Adrenal gland (tissue), 19 donors: ENCODE measurements at regions of chr2 and their contacts with region 1.

Region 1: GRCh38 chr2:181715033-181715630 is 34.8 kb upstream of the NEUROD1 start:
- DNase-seq: peak; percentile 55 to 85 (median 67)
- H3K4me3 ChIP-seq: no peak overlapping the region
- H3K27ac ChIP-seq: no peak overlapping the region
- H3K4me1 ChIP-seq: no peaks in the 10 kb centered on the region
- H3K27me3 ChIP-seq: no peaks in the 10 kb centered on the region
- CTCF ChIP-seq: peak; percentile 29 to 74 (median 66)
- POLR2A ChIP-seq: no peak

Region 2: DNA sequence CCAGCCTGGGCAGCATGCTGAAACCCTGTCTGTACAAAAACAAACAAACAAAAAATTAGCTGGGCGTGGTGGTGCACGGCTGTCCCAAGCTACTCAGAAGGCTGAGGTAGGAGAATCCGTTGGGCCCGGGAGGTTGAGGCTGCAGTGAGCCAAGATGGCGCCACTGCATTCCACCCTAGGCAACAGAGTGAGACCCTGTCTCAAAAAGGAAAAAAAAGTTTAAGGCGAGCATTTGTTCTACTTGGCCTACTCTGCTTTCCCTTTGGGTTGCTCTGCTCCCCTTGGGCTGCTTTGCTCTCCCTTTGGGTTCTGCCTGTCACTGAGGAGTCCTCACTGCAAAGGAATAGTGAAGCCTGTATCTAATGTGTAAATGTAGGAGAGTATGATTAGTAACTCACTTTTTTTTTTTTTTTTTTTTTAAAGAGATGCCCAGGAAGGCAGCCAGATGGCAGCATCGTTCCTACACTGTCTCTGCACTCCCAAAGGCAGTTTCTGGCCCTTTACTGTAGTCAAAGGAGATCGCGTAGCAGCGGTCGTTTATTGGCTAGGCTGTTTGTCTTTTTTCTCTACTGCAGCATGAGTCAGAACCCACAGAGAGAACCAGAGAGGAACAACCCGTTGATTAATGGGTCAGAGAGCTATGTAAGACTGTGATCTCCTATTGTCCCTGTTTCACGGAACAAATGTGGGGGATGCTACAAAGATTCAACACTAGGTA is 1589.7 kb before region 1 on chr2:
- intact Hi-C with region 1: loop called (anchors 5 to 10 kb)
- DNase-seq: peak; percentile 58 to 83 (median 76)
- H3K4me3 ChIP-seq: no peak overlapping the region
- H3K27ac ChIP-seq: no peak overlapping the region
- H3K4me1 ChIP-seq: no peaks in the 10 kb centered on the region
- H3K27me3 ChIP-seq: no peaks in the 10 kb centered on the region
- CTCF ChIP-seq: peak; percentile 15 to 63 (median 38)
- POLR2A ChIP-seq: no peak

Region 3: DNA sequence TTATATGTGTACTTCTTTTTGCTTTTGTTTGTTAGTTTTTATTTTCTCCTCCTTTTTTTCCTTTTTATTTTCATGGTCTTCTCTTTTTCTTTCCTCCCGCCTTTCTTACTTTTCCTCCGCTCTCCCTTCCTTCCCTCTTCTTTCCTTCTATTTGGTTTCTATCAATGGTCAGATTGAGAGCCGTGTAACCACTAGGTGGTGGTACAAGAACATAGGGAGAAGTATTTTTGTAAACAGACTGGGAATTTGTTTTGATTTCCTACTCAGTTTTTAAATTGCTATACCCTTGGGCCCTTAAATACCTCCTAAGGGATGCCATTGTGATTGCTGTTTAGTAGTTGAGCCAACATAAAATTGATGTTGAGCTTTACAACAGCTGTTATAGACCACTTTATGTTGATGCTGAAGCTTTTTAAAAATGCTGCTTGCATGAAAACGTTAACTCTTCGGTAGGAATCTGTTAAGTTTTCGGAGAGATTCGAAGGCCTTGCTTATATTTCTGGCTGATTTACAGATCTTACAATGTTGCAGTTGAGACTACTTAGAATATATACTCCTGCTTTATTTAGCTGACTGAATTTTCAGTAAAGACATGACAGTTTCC is 610.5 kb before region 1 on chr2:
- intact Hi-C with region 1: loop called in 1 of 2 experiments (anchors 10 kb)
- DNase-seq: peak in 2 of 7 donors; percentile 15 to 19
- H3K4me3 ChIP-seq: no peak overlapping the region
- H3K27ac ChIP-seq: no peak overlapping the region
- H3K4me1 ChIP-seq: no peaks in the 10 kb centered on the region
- H3K27me3 ChIP-seq: no peaks in the 10 kb centered on the region
- CTCF ChIP-seq: peak; percentile 26 to 62 (median 52)
- POLR2A ChIP-seq: no peak

Region 4: DNA sequence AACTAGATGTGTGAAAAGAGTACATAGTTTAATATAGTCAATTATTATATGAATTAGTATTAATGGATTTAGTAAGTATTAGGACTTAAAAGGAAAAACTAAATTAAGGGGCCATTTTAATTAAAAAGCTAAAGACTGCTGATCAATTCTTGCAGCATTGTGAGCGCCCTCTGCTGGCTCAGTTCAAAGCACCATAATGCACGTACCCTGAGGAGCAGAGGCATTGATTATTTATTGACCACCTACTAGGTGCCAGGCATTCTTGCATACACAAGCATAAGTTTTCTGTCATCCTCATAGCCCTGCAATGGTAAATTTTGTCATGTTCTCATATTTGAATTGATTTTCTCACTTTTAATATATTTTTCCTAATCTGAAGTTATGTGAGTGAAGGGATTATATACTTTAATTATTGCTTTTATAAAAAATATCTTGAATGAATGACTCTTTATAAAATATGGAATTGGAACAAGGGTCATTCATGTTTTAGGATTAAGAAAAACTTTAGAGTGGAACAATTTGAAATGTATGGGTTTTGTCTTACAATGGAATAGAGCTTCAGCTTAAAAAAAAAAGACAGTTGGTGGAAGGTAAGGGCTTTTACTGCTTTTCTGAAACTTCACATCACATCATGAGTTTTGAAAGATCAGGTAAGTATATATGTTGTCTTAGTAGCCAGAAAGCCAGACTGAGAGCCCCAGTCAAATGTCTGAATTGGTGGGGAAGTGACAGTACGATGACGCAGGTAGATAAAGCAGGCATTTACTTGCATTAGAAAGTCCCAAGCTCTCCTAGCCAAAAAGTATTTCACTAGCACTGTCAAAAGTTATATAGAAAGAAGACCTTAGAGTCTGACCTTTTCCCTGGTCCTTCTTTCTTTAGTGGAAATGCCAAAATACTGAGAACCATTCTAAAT is 248.2 kb before region 1 on chr2:
- intact Hi-C with region 1: loop called in 1 of 2 experiments (anchors 10 kb)
- DNase-seq: peak; percentile 32 to 83 (median 62)
- H3K4me3 ChIP-seq: no peak overlapping the region
- H3K27ac ChIP-seq: no peak overlapping the region
- H3K4me1 ChIP-seq: no peaks in the 10 kb centered on the region
- H3K27me3 ChIP-seq: no peaks in the 10 kb centered on the region
- CTCF ChIP-seq: peak; percentile 39 to 79 (median 58)
- POLR2A ChIP-seq: no peak

Region 5: GRCh38 chr2:181573140-181573736 is 141.9 kb before region 1 on chr2:
- intact Hi-C with region 1: loop called in 1 of 2 experiments (anchors 10 kb)
- DNase-seq: no peak
- H3K4me3 ChIP-seq: no peak overlapping the region
- H3K27ac ChIP-seq: no peak overlapping the region
- H3K4me1 ChIP-seq: no peaks in the 10 kb centered on the region
- H3K27me3 ChIP-seq: no peaks in the 10 kb centered on the region
- CTCF ChIP-seq: peak in 1 of 6 experiments; percentile 31
- POLR2A ChIP-seq: no peak

Region 6: DNA sequence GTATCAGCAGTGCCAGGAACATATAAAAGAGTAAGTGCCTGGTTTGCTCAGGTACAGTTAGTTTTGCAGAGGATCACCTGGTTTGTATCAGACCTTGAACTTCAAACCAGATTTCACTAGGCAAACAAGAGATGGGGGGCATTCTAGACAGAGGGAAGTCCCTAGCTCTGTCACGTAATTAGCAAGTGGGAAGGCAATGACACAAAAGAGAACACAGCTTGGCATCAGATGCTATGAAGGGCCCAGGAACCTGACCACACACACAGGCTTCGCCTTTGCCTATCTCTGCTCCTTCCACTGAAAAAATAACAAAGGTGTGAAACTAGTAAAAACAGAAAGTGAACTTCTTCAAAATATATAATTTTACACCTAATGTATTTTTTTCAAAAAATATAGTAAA is 120.8 kb before region 1 on chr2:
- intact Hi-C with region 1: no loop called
- DNase-seq: no peak
- H3K4me3 ChIP-seq: no peak overlapping the region
- H3K27ac ChIP-seq: no peak overlapping the region
- H3K4me1 ChIP-seq: no peaks in the 10 kb centered on the region
- H3K27me3 ChIP-seq: no peaks in the 10 kb centered on the region
- CTCF ChIP-seq: no peak
- POLR2A ChIP-seq: no peak

Region 7: DNA sequence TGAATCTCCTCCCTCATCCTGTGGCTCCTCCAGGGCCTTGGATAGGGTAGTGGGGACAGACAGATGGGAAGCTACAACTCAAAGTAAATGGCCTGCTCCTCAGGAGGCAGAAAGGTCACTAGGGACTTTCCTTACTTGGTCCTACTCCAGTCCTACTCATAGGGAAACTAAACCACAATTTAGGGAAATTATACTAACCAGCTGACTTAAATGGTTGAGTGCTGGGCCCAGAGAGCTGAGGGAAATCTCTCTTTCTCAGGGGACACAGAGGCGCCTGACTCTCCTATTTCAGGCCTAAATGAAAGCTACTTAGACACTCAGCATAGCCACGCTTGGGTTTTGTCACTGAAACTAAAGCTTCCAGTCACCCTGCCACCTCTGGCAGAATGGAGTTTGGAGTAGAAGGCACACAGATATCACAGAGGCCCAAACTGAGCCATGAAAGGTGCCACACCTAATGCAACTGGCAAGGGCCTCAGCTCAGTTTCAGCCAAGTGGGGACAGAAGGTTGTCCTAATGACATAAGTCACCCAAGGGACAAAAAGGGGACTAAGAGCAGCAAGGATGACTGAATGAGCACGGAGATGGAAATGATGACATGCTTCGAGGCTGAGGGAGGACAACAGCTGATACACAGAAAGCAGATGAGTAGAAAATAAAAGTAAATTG is 82.3 kb before region 1 on chr2:
- intact Hi-C with region 1: no loop called
- DNase-seq: no peak
- H3K4me3 ChIP-seq: no peak overlapping the region
- H3K27ac ChIP-seq: no peak overlapping the region
- H3K4me1 ChIP-seq: no peaks in the 10 kb centered on the region
- H3K27me3 ChIP-seq: no peaks in the 10 kb centered on the region
- CTCF ChIP-seq: no peak
- POLR2A ChIP-seq: no peak

Region 8: DNA sequence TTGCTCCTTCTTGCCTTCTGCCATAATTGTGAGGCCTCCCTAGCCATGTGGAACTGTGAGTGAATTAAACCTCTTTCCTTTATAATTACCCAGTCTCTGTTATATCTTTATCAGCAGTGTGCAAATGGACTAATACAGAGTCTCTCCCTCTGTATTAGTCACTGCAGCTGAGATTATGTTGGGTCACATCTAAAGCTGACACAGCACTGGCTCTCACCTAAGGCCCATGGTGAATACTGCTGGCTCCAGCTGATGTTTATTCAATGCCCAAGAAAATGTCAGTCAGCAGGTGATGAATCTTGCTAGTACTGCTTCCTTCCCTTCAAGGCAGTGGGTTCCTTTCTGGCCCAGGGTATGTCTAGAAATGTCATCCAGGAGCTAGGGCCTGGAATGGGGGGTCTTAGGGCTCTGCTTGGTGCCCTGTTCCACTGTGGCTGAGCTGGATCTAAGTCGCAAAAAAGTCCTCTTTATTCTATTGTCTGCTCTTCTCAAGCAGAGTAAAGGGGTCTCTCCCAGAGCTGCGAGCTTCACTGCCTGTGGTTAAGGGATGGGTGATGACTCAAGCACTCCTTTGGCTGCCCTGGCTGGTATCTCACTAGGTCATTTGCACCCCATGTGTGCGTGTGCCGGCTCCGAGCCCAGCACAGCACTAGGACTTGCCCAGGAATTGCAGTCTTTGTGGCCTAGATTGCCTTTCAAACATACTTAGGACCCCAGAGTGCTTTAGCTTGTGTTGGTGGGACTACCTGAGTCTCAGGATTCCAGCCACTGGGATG is 300.4 kb after region 1 on chr2:
- intact Hi-C with region 1: no loop called
- DNase-seq: no peak
- H3K4me3 ChIP-seq: no peak overlapping the region
- H3K27ac ChIP-seq: no peak overlapping the region
- H3K4me1 ChIP-seq: no peaks in the 10 kb centered on the region
- H3K27me3 ChIP-seq: no peaks in the 10 kb centered on the region
- CTCF ChIP-seq: no peak
- POLR2A ChIP-seq: no peak

Region 9: DNA sequence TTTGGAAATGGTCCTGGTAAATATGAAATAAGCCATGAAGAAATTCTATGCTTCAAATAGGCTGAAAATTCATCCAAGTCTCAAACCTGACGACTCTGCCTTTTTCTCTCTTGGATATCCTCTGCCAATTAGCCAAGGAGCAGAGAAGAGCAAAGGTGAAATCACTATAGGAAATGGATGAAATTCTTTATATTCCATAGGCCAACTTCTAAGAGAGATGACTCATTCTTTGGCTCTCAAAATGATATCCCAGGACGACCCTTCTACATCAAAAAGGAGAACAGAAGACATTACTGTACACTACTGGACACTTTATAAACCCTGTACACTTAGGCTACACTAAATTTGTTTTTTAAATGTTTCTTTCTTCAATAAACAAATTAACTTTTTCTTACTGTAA is 689.0 kb after region 1 on chr2:
- intact Hi-C with region 1: no loop called
- DNase-seq: no peak
- H3K4me3 ChIP-seq: no peak overlapping the region
- H3K27ac ChIP-seq: no peak overlapping the region
- H3K4me1 ChIP-seq: no peaks in the 10 kb centered on the region
- H3K27me3 ChIP-seq: no peaks in the 10 kb centered on the region
- CTCF ChIP-seq: no peak
- POLR2A ChIP-seq: no peak